ENCODE measurements at regions of chr3 and their contacts with region 1.

Region 1: DNA sequence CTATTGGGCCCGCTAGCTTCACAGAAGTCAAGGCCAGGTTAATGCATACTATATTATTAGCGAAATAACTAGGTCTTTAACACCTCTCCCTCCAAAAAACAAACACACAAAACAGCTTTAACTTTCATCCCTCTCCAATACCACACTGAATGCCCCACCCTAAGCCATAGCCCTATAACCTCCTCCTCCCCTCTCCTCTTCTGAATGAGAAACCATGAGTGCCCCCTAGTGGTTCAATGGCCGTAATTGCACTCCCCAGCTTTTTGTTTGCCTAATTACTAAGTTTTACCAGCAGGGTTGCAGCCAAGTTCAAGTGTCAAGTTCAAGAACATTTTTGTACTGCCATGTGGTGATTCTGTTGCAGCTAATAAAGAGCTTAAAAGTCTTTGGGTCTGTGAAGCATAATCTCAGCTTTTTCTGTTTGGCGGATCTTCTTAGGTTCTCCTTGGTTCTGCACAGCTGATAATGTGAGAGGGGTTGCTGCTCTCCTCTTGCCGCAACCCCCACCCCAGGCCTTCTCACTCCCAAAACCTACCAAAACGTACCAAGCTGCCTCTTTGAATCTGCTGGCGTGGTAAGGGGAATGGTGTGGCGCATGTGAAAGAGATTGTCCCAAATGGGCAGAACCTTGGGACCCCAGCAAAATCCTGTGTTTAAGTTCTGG is 57.9 kb downstream of the RPL22L1 start:
- DNase-seq: peak; percentile 98
- ATAC-seq: peak; percentile 36
- H3K4me3 ChIP-seq: peak overlapping the region; percentile 8; the same call in 1 of the 2 replicates
- H3K27ac ChIP-seq: peak overlapping the region; percentile 80
- H3K4me1 ChIP-seq: peaks cover 56% of the 10 kb centered on the region
- H3K27me3 ChIP-seq: no peaks in the 10 kb centered on the region
- CTCF ChIP-seq: peak; percentile 98

Region 2: DNA sequence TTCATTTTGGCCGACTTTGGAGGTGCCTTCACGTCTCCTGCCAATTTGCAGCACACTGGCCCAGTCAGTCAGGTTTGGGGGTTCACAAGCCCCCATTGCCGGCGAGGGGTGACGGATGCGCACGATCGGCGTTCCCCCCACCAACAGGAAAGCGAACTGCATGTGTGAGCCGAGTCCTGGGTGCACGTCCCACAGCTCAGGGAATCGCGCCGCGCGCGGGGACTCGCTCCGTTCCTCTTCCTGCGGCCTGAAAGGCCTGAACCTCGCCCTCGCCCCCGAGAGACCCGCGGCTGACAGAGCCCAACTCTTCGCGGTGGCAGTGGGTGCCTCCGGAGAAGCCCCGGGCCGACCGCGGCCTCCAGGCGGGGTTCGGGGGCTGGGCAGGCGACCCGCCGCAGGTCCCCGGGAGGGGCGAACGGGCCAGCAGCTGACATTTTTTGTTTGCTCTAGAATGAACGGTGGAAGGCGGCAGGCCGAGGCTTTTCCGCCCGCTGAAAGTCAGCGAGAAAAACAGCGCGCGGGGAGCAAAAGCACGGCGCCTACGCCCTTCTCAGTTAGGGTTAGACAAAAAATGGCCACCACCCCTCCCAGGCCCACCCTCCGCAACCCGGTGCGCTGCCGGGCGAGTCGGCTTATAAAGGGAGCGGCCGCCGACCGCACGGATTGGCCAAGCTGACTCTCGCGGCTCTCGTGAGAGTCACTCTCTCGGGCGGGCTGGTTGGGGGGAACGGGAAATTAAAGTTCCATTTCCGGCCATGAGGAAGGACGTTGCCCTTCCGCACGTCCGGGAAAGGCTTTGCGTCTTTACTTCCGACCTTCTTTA is 1047.4 kb before region 1 on chr3 and contains the start of gene TERC:
- CTCF ChIA-PET with region 1: no interaction called
- POLR2A ChIA-PET with region 1: no interaction called
- intact Hi-C with region 1: loop called (anchors 10 kb)
- DNase-seq: peak; percentile 97
- ATAC-seq: peak; percentile 85
- H3K4me3 ChIP-seq: peak within 1 kb of the TSS; percentile 81
- H3K27ac ChIP-seq: peak within 1 kb of the TSS; percentile 82
- H3K4me1 ChIP-seq: peaks cover 9% of the 10 kb centered on the region
- H3K27me3 ChIP-seq: no peaks in the 10 kb centered on the region
- CTCF ChIP-seq: no peak
- total RNA-seq, gene TERC: 544 and 737 TPM in 2 replicates

Region 3: GRCh38 chr3:170414202-170414663 is 397.8 kb before region 1 on chr3:
- CTCF ChIA-PET with region 1: interaction called, 59 read pairs
- POLR2A ChIA-PET with region 1: interaction called, 3 read pairs
- intact Hi-C with region 1: loop called (anchors 1 kb)
- DNase-seq: peak; percentile 85
- ATAC-seq: peak; percentile 39
- H3K4me3 ChIP-seq: peak overlapping the region; percentile 23; the same call in 1 of the 2 replicates
- H3K27ac ChIP-seq: no peak overlapping the region
- H3K4me1 ChIP-seq: peaks cover 15% of the 10 kb centered on the region
- H3K27me3 ChIP-seq: no peaks in the 10 kb centered on the region
- CTCF ChIP-seq: peak; percentile 98

Region 4: DNA sequence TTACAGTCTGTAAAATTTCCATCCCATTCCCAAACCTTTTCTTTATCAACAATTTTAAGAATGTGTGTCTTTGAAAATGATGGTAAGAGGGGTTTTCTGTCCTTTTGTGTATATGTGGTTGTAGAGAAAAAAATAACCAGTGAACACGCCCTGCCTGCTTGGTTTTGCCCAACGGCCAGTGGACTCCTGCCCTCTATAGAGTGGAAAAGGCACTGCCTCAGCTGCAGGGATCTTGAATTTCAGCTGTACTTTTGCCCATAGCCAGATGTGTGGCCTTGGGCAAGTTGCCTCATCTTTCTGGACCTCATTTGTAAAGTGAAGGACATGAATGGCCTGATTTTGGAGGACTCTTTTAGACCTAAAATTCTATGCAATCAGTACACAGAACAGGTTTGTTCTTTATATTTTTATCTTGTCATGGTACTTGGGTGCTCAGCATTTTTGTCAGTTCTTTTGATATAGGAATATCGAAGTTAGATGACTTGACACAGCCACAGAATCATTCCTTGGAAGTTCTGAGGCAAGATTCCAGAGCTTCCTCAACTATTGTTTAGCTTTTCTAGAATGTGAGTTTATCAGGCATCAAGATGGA is 312.4 kb before region 1 on chr3:
- CTCF ChIA-PET with region 1: interaction called, 3 read pairs
- POLR2A ChIA-PET with region 1: no interaction called
- intact Hi-C with region 1: loop called (anchors 1 kb)
- DNase-seq: peak; percentile 60
- ATAC-seq: peak; percentile 89
- H3K4me3 ChIP-seq: no peak overlapping the region
- H3K27ac ChIP-seq: no peak overlapping the region
- H3K4me1 ChIP-seq: no peaks in the 10 kb centered on the region
- H3K27me3 ChIP-seq: no peaks in the 10 kb centered on the region
- CTCF ChIP-seq: peak; percentile 76

Region 5: DNA sequence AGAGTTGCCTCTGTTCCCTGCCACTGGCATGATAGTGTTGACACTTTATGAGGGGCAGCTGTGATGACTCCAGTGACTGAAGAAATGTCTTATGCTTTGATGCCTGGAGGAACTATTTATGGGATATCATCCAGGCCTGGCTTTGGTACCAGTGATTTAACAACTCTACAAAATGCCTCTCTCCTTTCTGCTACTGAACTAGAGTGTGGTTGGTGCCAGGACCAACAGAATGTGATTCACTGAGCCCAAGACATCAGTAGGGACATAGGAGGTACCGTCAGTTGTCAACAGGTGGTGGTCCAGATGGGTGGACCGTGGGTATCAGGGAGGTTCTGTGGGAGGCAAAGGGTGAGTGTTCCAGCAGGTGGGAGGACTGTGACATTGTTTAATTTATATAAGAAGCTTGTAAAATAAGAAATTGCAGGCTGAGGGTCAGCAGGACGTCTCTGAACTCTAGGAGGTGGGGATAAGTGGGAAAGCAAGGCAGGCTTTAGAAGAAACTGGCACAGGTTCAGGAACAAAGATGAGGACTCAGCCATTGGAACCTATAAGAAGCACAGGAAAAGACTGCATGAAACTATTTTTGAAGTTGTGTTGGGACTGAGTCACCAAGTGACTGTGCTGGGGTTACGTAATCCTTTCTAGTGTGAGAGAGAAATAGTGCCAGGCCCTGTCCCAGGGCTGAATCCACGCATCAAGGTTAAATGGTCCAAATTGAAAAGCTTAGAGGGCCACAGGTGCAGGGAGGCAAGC is 197.7 kb before region 1 on chr3:
- CTCF ChIA-PET with region 1: no interaction called
- POLR2A ChIA-PET with region 1: no interaction called
- intact Hi-C with region 1: loop called (anchors 1 kb)
- DNase-seq: peak; percentile 91
- ATAC-seq: peak; percentile 100
- H3K4me3 ChIP-seq: no peak overlapping the region
- H3K27ac ChIP-seq: peak overlapping the region; percentile 15; the same call in 1 of the 2 replicates
- H3K4me1 ChIP-seq: peaks cover 10% of the 10 kb centered on the region
- H3K27me3 ChIP-seq: no peaks in the 10 kb centered on the region
- CTCF ChIP-seq: no peak

Region 6: DNA sequence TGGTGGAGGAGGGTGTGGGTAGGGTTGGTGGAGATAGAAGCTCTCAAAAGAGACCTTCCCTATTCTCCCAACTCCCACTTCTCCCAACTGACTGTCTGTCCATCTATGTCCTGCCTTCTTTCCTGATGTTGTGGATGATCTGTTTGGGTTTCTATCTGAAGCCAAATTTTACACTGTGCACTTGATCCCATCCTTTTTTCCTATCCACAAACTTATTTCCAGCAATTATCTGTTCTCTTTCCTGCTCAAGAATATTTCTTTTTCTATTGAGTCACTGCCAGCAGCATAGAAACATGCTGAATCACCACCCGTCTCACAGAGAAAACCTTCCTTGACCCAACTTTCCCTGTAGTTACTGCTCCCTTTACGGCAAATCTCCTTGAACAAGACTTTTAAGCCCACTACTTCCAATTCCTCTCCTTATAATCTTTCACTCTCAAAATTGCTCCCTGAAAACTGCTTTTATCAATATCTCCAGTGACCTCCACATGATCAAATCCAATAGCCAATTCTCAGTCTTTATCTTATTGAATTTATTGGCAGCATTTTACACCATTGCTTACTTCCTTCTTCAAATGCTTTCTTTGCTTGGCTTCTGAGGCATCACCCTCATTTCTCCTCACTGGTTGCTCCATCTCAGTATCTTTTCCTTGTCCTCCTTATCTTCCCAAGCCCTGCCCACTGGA is 84.9 kb before region 1 on chr3:
- CTCF ChIA-PET with region 1: no interaction called
- POLR2A ChIA-PET with region 1: no interaction called
- intact Hi-C with region 1: no loop called
- DNase-seq: peak; percentile 84
- ATAC-seq: peak; percentile 78
- H3K4me3 ChIP-seq: peak overlapping the region; percentile 47
- H3K27ac ChIP-seq: peak overlapping the region; percentile 89
- H3K4me1 ChIP-seq: peaks cover 28% of the 10 kb centered on the region
- H3K27me3 ChIP-seq: no peaks in the 10 kb centered on the region
- CTCF ChIP-seq: no peak

Region 7: DNA sequence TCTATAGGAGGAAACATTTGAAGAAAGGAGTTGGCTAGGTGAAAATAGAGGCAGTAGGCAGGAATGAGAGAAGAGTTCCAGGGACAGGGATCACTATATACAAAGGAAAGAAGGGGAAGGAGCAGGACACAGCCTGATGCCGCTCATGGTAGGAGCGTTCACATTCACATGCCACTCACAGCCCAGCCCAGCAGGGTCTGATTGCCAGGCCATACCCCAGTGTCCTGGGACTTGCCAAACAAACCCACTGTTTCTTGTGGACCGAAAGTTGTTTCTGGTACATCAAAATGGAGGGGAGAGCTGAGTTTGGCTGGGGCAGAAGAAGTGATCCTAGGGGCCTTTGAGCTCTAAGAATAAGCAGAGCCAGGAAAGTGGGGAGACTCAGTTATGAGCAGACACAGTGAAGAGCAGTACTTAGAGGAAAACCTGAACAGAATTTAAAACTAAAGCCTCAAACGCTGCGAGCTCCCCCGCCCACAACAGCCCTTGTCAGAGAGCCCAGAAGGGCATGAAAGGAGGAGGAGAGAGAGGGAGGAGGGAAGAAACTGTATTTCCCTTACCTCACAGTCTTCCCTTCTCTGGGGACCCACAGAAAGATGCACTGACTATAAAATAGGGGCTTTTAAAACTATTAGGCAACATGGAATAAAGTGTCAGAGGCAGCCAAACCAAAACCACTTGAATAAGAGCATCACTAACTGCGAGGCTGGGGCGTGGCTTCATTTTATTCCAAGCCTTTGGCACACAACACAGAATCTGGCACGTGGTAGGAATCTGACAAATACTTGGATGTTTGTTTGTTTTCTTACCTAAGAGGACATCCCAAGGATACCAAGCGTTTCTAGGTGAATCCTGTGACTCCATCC is 71.1 kb before region 1 on chr3:
- CTCF ChIA-PET with region 1: interaction called, 8 read pairs
- POLR2A ChIA-PET with region 1: no interaction called
- intact Hi-C with region 1: loop called (anchors 1 kb)
- DNase-seq: peak; percentile 93
- ATAC-seq: peak; percentile 46
- H3K4me3 ChIP-seq: peak overlapping the region; percentile 23; the same call in 1 of the 2 replicates
- H3K27ac ChIP-seq: peak overlapping the region; percentile 90
- H3K4me1 ChIP-seq: peaks cover 70% of the 10 kb centered on the region
- H3K27me3 ChIP-seq: no peaks in the 10 kb centered on the region
- CTCF ChIP-seq: no peak

Region 8: DNA sequence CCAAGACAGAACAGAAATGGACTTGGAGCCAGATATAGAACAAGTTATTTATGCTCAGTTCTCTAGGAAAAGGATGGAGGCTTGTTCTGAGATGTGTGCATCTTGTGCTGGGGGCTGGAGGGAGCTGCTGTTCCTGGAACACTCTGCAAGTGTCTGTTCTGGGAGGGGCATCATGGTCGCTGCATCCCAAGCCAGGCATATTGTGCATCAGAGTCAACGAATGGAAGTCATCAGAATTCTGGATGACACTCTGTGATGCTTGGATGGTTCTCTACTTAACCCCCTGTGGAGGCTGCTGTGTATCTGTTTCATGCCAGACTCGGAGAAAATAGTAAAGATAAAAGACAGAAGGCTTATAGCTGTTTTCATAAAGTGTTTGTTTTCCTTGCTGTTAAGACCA is 23.3 kb after region 1 on chr3:
- CTCF ChIA-PET with region 1: no interaction called
- POLR2A ChIA-PET with region 1: no interaction called
- intact Hi-C with region 1: no loop called
- DNase-seq: no peak
- ATAC-seq: no peak
- H3K4me3 ChIP-seq: no peak overlapping the region
- H3K27ac ChIP-seq: no peak overlapping the region
- H3K4me1 ChIP-seq: no peaks in the 10 kb centered on the region
- H3K27me3 ChIP-seq: no peaks in the 10 kb centered on the region
- CTCF ChIP-seq: no peak

Region 9: GRCh38 chr3:170848292-170848917 is 36.3 kb after region 1 on chr3:
- CTCF ChIA-PET with region 1: interaction called, 11 read pairs
- POLR2A ChIA-PET with region 1: no interaction called
- intact Hi-C with region 1: loop called (anchors 2 kb)
- DNase-seq: peak; percentile 75
- ATAC-seq: peak; percentile 63
- H3K4me3 ChIP-seq: no peak overlapping the region
- H3K27ac ChIP-seq: no peak overlapping the region
- H3K4me1 ChIP-seq: no peaks in the 10 kb centered on the region
- H3K27me3 ChIP-seq: no peaks in the 10 kb centered on the region
- CTCF ChIP-seq: peak; percentile 83

Region 10: DNA sequence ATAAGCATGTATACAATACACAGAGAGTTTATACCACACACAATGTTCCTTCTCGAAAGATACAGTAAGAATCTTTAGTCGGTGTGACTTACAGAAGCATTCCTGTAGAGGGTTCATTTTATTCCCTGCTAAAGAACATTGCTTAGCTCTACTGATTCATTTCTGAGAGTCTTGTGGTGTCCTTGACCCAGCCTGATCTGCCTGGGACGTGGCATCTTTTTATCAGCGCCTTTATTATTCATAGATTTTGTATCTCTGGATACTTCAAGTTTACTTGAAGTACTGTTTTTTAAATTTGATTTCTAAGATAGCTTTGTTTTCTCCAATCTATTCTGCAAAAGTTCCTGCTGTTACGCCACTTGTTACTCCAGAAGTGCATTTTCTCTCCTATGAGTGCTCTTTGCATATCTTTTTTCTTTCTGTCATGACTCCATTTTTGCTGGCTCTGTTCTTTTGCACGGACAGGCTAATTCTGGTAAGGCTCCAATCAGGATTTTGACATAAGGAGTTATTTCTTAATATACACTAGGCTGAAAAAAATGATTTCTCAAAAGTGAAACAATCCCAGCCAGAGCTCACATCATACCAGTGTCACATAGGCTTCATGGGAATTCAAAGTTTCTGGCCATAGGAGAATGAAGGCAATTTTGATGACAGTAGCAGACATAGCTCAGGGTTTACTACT is 762.6 kb after region 1 on chr3:
- CTCF ChIA-PET with region 1: no interaction called
- POLR2A ChIA-PET with region 1: no interaction called
- intact Hi-C with region 1: no loop called
- DNase-seq: no peak
- ATAC-seq: no peak
- H3K4me3 ChIP-seq: no peak overlapping the region
- H3K27ac ChIP-seq: no peak overlapping the region
- H3K4me1 ChIP-seq: no peaks in the 10 kb centered on the region
- H3K27me3 ChIP-seq: no peaks in the 10 kb centered on the region
- CTCF ChIP-seq: no peak